PC-9 (cell line): ENCODE measurements at regions of chr5 and their contacts with region 1.

Region 1: GRCh38 chr5:10214041-10214440 is 35.6 kb downstream of the ATPSCKMT start:
- DNase-seq: no peak
- H3K4me3 ChIP-seq: no peak overlapping the region
- H3K27ac ChIP-seq: no peak overlapping the region
- H3K4me1 ChIP-seq: no peaks in the 10 kb centered on the region
- H3K27me3 ChIP-seq: no peaks in the 10 kb centered on the region
- CTCF ChIP-seq: no peak

Region 2: GRCh38 chr5:10192309-10192708 is 21.7 kb before region 1 on chr5:
- CTCF ChIA-PET with region 1: no interaction called
- POLR2A ChIA-PET with region 1: interaction called, 12 read pairs
- intact Hi-C with region 1: no loop called
- DNase-seq: no peak
- H3K4me3 ChIP-seq: no peak overlapping the region
- H3K27ac ChIP-seq: no peak overlapping the region
- H3K4me1 ChIP-seq: no peaks in the 10 kb centered on the region
- H3K27me3 ChIP-seq: peaks cover 27% of the 10 kb centered on the region
- CTCF ChIP-seq: no peak

Region 3: GRCh38 chr5:10377081-10377480 is 163.0 kb after region 1 on chr5:
- CTCF ChIA-PET with region 1: no interaction called
- POLR2A ChIA-PET with region 1: interaction called, 34 read pairs
- intact Hi-C with region 1: no loop called
- DNase-seq: no peak
- H3K4me3 ChIP-seq: no peak overlapping the region
- H3K27ac ChIP-seq: no peak overlapping the region
- H3K4me1 ChIP-seq: no peaks in the 10 kb centered on the region
- H3K27me3 ChIP-seq: no peaks in the 10 kb centered on the region
- CTCF ChIP-seq: no peak

Region 4: GRCh38 chr5:10387690-10388089 is 173.6 kb after region 1 on chr5:
- CTCF ChIA-PET with region 1: no interaction called
- POLR2A ChIA-PET with region 1: interaction called, 11 read pairs
- intact Hi-C with region 1: no loop called
- DNase-seq: no peak
- H3K4me3 ChIP-seq: no peak overlapping the region
- H3K27ac ChIP-seq: no peak overlapping the region
- H3K4me1 ChIP-seq: no peaks in the 10 kb centered on the region
- H3K27me3 ChIP-seq: no peaks in the 10 kb centered on the region
- CTCF ChIP-seq: no peak